Left ventricle myocardium inferior (tissue), 1 donor: ENCODE measurements at regions of chr18 and their contacts with region 1.

Region 1: DNA sequence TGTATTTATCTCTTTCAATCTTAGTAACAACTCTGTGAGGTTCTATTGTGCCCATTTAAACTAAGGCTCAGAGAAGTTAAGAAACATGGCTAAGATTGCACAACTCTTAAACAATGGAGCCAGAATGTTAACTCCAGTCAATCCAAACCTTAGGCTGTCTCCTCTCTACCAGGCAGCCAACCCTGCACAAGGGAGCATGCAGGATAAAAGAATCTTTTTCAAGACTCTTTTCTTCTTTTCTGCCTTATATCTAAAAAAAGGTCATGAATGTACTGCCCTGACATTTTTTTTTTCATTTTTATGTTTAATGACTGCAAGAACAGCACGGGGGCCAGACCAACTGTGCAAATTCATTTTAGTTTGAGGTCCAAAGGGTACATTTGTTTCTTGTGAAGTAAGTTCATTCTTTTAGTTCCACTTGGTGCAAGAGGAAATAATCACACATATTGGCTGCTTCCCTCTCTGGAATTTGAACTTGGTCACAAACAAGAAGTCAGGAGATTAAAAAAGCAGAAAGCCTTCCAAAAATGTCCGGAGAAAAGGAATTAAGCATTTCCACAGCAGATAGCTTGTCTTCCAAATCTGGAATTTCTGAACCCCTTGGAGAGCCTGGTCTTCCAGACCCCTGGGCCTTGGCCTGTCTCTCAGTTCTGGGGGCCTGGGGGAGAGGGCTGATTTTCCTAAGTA is 96.0 kb upstream of the RIOK3 start:
- DNase-seq: no peak
- H3K4me3 ChIP-seq: peak overlapping the region; percentile 44
- H3K27ac ChIP-seq: peak overlapping the region; percentile 76
- H3K4me1 ChIP-seq: peaks cover 33% of the 10 kb centered on the region
- H3K27me3 ChIP-seq: peaks cover 3% of the 10 kb centered on the region
- CTCF ChIP-seq: no peak

Region 2: DNA sequence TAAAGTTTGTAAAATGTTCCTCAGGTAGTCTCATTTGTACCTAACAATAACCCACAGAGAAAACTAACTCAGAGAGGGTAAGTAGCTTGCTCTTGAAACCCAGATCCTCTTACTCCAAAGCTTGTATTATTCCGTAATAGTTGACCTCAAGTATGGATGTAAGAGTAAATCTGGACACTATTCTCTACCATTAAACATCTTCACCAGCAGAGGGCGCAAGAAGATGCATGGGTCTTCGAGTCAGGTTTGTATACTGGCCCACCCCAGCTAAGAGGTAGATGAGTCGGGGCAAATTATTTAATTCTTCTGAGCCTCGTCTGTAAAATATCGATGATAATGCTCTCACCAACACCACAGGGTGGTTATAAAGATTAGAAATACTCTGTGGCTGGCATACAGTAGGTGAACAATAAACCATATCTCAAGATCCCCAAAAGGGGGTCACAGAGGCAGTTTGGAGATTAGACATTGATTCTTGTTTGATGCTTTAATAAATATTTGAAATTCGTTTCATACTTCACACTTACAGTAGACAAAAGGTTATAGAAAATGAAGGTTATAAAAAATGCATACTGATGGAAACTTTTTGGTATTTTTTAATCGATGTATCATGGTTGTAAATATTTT is 225.3 kb before region 1 on chr18:
- intact Hi-C with region 1: loop called (anchors 5 kb)
- DNase-seq: no peak
- H3K4me3 ChIP-seq: no peak overlapping the region
- H3K27ac ChIP-seq: no peak overlapping the region
- H3K4me1 ChIP-seq: peaks cover 21% of the 10 kb centered on the region
- H3K27me3 ChIP-seq: peaks cover 58% of the 10 kb centered on the region
- CTCF ChIP-seq: peak; percentile 87